Mammary epithelial cell (primary cell): ENCODE measurements at regions of chr9 and their contacts with region 1.

Region 1: DNA sequence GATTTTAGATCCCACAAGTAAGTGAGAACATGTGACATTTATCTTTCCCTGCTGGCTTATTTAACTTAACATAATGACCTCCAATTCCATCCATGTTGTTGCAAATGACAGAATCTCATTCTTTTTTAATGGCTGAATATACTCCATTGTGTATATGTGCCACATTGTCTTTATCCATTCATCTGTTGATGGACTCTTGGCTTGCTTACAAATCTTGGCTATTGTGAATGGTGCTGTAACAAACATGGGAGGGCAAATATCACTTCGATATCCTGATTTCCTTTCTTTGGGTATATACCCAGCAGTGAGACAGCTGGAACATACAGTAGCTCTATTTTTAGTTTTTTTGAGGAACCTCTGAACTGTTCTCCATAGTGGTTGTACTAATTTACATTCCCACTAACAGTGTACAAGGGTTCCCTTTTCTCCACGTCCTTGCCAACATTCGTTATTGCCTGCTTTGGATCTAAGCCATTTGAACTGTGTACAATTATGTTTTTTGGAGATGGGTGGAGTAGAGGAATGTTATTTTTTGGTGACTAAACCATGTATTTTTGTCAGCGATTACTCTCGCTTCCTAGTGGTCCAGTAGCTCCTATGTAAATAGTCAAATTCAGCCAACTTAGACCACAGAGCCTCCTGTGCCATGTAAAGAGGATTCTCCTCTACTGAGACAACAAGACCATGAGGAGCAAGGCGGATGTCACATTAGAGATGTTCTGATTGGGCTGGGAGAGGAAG is 60.6 kb downstream of the TNFSF15 start:
- DNase-seq: no peak
- H3K4me3 ChIP-seq: no peak overlapping the region
- H3K27ac ChIP-seq: no peak overlapping the region
- H3K4me1 ChIP-seq: no peaks in the 10 kb centered on the region
- H3K27me3 ChIP-seq: no peaks in the 10 kb centered on the region
- CTCF ChIP-seq: no peak

Region 2: DNA sequence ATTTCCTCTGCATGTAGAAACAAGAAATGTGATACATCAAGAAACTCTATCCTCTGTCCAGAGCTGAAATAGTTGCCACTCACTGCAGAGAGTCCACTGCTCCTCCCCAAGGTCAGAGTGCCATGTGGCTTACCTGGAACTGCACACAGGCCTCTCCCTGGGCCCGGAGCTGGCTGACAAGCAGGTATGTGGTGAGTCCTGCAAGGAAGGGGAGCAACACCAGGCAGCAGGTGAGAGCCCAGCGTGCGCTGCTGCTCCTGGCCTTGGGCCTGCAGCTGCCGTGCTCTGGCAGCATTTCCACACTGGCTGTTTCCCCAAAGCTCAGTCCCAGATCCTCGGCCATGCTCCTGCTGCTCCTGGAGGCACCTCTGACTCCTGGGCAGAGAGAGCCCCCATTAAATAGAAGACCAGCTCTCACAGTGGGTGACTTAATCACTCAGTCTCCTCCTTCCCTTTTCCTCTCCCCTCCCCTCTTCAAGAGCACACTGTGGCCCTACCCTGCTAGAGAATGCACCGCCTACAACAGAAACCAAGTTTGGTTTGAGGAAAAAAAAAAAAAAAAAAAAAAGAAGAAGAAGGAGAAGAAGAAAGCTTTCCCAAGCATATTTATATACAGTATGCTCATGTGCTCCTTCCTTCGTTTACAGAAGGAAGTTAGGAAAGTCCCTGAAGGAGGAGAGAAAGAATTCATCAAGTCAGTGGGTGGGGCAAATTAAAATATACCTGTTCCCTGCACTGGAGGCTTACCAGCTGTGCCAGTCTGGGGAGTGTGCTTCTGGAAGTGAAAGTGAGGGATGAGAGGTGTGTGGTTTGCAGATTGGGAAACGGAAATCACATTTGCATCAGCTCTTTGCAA is 60.6 kb after region 1 on chr9 and contains the start of gene TNFSF15:
- CTCF ChIA-PET with region 1: no interaction called
- dilution Hi-C with region 1: no loop called
- in situ Hi-C with region 1: no loop called
- intact Hi-C with region 1: loop called (anchors 5 kb)
- DNase-seq: peak; percentile 82
- H3K4me3 ChIP-seq: peak within 1 kb of the TSS; percentile 12 to 37 (median 14)
- H3K27ac ChIP-seq: peak within 1 kb of the TSS; percentile 64
- H3K4me1 ChIP-seq: peaks cover 36% of the 10 kb centered on the region
- H3K27me3 ChIP-seq: no peaks in the 10 kb centered on the region
- CTCF ChIP-seq: peak in 1 of 2 donors; percentile 8
- total RNA-seq, gene TNFSF15: 1.3 to 2.1 TPM

Region 3: GRCh38 chr9:114894801-114895433 is 149.6 kb after region 1 on chr9:
- CTCF ChIA-PET with region 1: no interaction called
- dilution Hi-C with region 1: loop called (anchors 10 kb)
- in situ Hi-C with region 1: no loop called
- intact Hi-C with region 1: no loop called
- DNase-seq: peak; percentile 88
- H3K4me3 ChIP-seq: no peak overlapping the region
- H3K27ac ChIP-seq: peak overlapping the region; percentile 68
- H3K4me1 ChIP-seq: peaks cover 31% of the 10 kb centered on the region
- H3K27me3 ChIP-seq: no peaks in the 10 kb centered on the region
- CTCF ChIP-seq: no peak

Region 4: DNA sequence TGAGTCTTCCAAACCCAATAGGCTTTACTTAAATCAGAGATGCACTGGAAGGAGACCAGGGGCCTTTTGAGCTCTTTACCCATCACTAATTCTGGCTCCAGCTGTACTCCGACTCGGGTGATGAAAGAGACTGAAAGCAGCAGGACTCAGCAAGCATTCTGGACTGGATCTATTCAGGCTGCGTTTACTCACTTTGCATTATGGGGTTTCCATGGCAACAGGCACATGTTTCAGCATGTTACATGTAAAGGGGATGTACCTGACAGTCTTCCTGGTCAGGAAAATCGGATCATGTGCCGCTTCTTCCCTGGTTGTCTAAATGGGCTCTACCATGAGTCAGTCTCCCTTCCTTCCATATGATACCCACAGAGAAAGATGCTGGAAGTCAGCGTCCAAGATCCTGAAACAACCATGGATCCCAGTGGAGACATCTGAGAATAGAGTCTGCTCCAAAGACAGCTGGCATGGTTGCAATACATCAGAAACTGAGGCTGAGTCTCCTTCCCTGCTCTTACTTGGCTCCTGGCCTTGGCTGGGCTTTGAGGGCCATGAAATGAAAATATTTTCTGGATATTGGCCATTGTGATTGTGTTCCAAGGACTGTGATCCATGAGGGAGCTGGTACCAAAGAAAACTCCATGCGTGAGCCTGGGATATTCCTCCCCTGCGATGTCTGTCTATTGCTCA is 475.2 kb after region 1 on chr9:
- CTCF ChIA-PET with region 1: no interaction called
- dilution Hi-C with region 1: no loop called
- in situ Hi-C with region 1: no loop called
- intact Hi-C with region 1: no loop called
- DNase-seq: peak; percentile 49
- H3K4me3 ChIP-seq: no peak overlapping the region
- H3K27ac ChIP-seq: no peak overlapping the region
- H3K4me1 ChIP-seq: no peaks in the 10 kb centered on the region
- H3K27me3 ChIP-seq: no peaks in the 10 kb centered on the region
- CTCF ChIP-seq: no peak